Heart right ventricle (tissue), 16 donors: ENCODE measurements at regions of chr11 and their contacts with region 1.

Region 1: DNA sequence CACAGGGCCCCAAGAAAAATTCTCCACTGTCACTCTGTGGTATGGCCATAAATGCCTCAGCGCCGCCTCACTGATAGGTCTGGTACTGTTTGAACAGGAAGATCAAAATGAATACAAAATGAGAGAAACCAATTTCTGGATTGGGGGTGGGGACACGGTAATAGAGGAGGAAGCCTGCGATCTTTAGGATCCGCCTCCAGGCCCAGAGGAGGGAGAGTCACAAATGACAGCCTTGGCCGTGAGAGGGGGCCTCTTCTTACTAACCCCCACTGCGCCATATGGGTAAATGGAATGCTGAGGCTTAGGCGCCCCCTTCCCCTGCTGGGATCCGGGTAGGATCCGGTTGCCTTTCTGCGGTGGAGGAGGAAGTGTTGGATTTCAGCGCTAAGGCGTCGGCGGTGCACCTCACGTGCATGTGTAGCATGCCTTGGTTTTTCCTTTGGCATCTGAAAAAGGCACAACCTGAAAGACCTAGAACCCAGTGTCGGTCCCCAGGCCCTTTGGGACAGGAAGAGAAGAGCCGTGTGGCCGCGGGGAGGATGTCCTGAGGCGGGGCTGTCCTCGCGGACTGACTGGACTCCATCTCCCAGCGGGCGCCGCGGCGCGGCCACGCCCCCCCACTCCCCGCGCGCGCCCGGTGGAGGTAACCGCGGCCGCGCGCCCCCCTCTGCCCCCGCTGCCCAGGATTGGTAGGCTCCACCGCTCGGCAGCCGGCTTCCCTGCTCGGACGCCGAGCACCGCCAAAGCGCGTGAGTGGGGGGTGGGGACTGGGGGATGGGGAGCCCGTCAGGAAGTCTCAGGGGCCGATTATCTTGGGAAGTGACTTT is 718 bp upstream of the MADD start:
- DNase-seq: peak; percentile 90 to 91
- ATAC-seq: peak; percentile 89 to 95 (median 92)
- H3K4me3 ChIP-seq: peak overlapping the region; percentile 54 to 91 (median 82)
- H3K27ac ChIP-seq: peak overlapping the region; percentile 92 to 99 (median 98)
- H3K4me1 ChIP-seq: peaks cover 10 to 61% (median 49%) of the 10 kb centered on the region in 9 donors
- H3K27me3 ChIP-seq: no peaks in the 10 kb centered on the region
- CTCF ChIP-seq: peak in 4 of 9 donors; percentile 13 to 29 (median 20)

Region 2: GRCh38 chr11:47220401-47220824 is 48.8 kb before region 1 on chr11:
- intact Hi-C with region 1: loop called in 1 of 10 experiments (anchors 5 kb)
- DNase-seq: no peak
- ATAC-seq: peak in 4 of 8 donors; percentile 34 to 53 (median 44)
- H3K4me3 ChIP-seq: no peak overlapping the region
- H3K27ac ChIP-seq: peak overlapping the region in 4 of 10 donors; percentile 16 to 50 (median 26)
- H3K4me1 ChIP-seq: peaks cover 9 to 49% (median 27%) of the 10 kb centered on the region in 9 donors
- H3K27me3 ChIP-seq: no peaks in the 10 kb centered on the region
- CTCF ChIP-seq: no peak

Region 3: DNA sequence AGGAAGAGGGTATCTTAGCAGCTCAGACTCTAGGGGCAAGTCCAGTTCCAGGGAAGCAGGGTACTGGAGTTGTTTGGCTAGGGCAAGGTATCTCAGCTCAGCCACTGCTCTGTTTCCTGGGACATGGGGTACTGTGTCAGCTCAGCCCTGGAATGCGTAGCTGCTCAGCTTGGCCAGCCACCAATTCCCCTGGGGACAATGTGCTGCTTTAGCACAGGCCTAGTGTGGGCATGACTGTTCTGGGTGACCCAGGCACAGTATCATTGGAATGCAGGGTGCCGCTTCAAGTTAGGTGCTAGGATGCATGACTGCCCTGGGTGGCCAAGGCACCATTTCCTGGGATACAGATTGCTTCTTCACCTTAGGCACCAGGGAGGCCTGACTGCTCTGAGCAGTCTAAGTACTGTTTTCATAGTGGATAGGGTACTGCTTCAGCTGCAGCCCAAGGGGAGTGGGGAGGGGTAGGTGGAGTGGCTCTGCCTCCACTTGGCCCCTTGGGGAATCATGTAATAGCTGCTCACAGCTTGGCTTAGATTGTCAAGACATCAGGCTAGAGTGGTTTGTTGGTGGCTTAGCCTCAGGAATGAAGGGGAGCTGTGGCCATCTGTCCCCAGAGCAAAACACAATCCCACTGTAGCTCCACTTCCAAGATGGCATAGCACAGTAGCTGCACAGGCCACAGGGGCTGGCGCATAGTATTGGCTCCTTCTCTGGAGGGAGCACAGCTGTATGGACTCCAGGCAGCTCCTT is 36.7 kb after region 1 on chr11:
- intact Hi-C with region 1: loop called in 1 of 10 experiments (anchors 5 kb)
- DNase-seq: peak; percentile 65 to 74
- ATAC-seq: peak; percentile 90 to 98 (median 96)
- H3K4me3 ChIP-seq: no peak overlapping the region
- H3K27ac ChIP-seq: peak overlapping the region; percentile 18 to 86 (median 74)
- H3K4me1 ChIP-seq: peaks cover 6 to 26% (median 13%) of the 10 kb centered on the region in 9 donors
- H3K27me3 ChIP-seq: no peaks in the 10 kb centered on the region
- CTCF ChIP-seq: no peak